ENCODE measurements at regions of chr14 and their contacts with region 1.

Region 1: DNA sequence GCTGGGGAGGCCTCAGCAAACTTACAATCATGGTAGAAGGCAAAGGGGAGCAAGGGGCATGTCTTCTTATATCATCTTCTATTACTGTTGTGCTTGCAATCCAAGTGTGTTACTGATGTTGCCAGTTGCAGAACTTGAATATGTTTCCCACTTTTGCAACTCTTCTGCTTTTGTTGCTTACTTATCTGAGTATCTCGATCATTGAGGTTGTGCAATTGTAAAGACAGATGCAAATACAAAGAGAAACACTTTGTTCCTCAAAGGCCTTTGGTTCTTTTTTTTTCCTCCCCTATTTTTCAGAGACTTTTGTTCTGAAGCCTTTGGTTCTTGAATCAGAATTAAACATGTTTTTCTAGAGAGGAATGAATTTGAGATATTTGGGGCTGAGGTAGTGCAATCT is 3.7 kb upstream of the COX8C start:
- DNase-seq: no peak
- H3K4me3 ChIP-seq: no peak overlapping the region
- H3K27ac ChIP-seq: no peak overlapping the region
- H3K27me3 ChIP-seq: no peaks in the 10 kb centered on the region
- CTCF ChIP-seq: no peak

Region 2: GRCh38 chr14:93375673-93376156 is 32.4 kb after region 1 on chr14:
- intact Hi-C with region 1: loop called in 1 of 2 experiments (anchors 5 kb)
- DNase-seq: no peak
- H3K4me3 ChIP-seq: no peak overlapping the region
- H3K27ac ChIP-seq: no peak overlapping the region
- H3K27me3 ChIP-seq: no peaks in the 10 kb centered on the region
- CTCF ChIP-seq: no peak

Region 3: GRCh38 chr14:93464271-93464670 is 121.0 kb after region 1 on chr14:
- intact Hi-C with region 1: no loop called
- DNase-seq: no peak
- H3K4me3 ChIP-seq: no peak overlapping the region
- H3K27ac ChIP-seq: peak overlapping the region in 1 of 59 donors; percentile 33
- H3K27me3 ChIP-seq: no peaks in the 10 kb centered on the region
- CTCF ChIP-seq: no peak

Region 4: GRCh38 chr14:93510066-93510465 is 166.8 kb after region 1 on chr14:
- intact Hi-C with region 1: no loop called
- DNase-seq: no peak
- H3K4me3 ChIP-seq: no peak overlapping the region
- H3K27ac ChIP-seq: no peak overlapping the region
- H3K27me3 ChIP-seq: no peaks in the 10 kb centered on the region
- CTCF ChIP-seq: no peak

Measured in dorsolateral prefrontal cortex (tissue), 120 donors.